Endothelial cell of umbilical vein (primary cell): ENCODE measurements at regions of chr4 and their contacts with region 1.

Region 1: GRCh38 chr4:143482840-143483239 is 30.7 kb upstream of the SMARCA5 start:
- DNase-seq: peak; percentile 74
- H3K4me3 ChIP-seq: no peak overlapping the region
- H3K27ac ChIP-seq: no peak overlapping the region
- H3K4me1 ChIP-seq: no peaks in the 10 kb centered on the region
- H3K27me3 ChIP-seq: no peaks in the 10 kb centered on the region
- CTCF ChIP-seq: peak; percentile 26 to 42
- POLR2A ChIP-seq: no peak

Region 2: DNA sequence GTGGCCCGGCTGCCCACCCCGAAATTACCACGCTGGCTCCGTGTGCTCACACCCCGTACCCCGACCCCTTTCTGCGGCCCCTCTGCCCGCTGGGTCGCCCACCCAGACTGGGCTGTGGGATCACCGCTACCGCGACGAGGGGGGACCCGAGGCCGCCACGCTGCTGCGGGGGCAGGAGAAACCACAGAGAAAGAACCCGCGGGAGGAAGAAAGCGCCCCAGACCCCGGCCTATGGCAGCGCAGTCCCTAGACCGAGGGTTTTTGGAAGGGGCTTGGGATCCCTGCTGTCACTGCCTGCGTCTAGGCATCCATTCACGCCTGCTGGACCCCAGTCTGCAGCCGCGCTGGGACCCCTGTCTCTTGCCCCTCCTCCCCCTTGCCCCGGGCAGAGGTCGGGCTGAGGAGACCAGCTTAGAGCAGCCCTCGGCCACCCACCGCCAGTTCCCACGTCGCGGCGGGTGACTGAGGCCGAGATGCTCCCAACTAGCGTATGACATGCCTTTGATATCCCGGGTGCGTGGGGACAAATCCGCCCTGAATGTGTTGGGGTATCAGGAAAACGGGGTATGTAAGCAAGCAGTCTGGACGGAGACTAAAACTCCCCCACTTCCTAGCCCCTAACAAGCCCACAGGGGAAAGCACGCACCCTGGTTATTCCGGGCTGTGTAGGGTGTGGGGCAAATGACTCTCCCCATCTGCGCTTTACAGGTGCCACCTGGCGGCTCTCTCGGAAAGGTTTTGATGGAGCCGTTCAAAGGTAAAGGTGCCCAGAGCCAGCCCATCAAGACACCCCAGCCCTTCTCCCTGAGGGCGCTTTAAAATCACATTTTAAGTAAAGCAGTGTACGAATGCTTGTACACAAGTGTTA is 635.9 kb before region 1 on chr4:
- CTCF ChIA-PET with region 1: no interaction called
- POLR2A ChIA-PET with region 1: no interaction called
- dilution Hi-C with region 1: no loop called
- intact Hi-C with region 1: loop called (anchors 5 kb)
- DNase-seq: peak; percentile 18
- H3K4me3 ChIP-seq: peak overlapping the region; percentile 42 to 68 (median 61)
- H3K27ac ChIP-seq: no peak overlapping the region
- H3K4me1 ChIP-seq: no peaks in the 10 kb centered on the region
- H3K27me3 ChIP-seq: peaks cover 14 to 21% of the 10 kb centered on the region in 2 experiments
- CTCF ChIP-seq: peak in 1 of 2 donors; percentile 22
- POLR2A ChIP-seq: no peak

Region 3: DNA sequence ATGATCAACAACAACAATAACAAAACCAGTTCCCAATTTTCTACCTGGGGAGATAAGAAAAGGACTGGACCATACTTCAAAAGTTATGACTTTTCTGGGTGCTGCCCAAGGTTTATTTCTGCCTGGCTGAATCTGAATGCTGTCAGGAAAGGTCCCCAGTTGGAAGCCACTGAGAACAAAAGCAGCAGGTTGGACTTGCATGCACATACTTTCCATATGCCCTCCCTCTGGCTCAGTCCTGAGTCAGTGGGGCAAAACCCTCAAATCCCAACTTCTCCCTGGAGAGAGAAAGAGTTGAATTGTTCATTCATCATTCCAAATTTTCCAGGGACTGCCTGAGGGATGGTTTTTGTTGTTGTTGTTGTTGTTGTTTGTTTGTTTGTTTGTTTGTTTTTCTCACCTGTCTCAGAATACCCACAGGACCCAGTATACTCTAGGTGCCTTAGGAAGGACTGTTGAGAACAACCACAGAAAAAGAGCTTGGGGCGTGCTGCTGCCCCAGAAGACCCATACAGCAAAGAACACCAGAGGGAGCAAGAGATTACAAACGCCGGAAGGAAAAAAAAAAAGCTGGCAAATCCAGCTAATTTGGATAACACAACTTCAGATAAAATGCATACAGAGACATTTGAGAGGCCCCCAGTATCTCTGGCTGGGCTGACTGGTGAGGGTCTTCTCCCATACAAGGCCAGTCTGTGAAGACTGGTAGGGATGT is 497.8 kb before region 1 on chr4:
- CTCF ChIA-PET with region 1: interaction called, 13 read pairs
- POLR2A ChIA-PET with region 1: no interaction called
- dilution Hi-C with region 1: no loop called
- intact Hi-C with region 1: loop called (anchors 1 kb)
- DNase-seq: peak; percentile 13
- H3K4me3 ChIP-seq: no peak overlapping the region
- H3K27ac ChIP-seq: no peak overlapping the region
- H3K4me1 ChIP-seq: no peaks in the 10 kb centered on the region
- H3K27me3 ChIP-seq: peaks cover 0 to 5% of the 10 kb centered on the region in 2 experiments
- CTCF ChIP-seq: peak; percentile 11 to 24
- POLR2A ChIP-seq: no peak

Region 4: GRCh38 chr4:143202824-143203223 is 280.0 kb before region 1 on chr4:
- CTCF ChIA-PET with region 1: interaction called, 24 read pairs
- POLR2A ChIA-PET with region 1: no interaction called
- dilution Hi-C with region 1: no loop called
- intact Hi-C with region 1: loop called (anchors 1 kb)
- DNase-seq: peak; percentile 46
- H3K4me3 ChIP-seq: no peak overlapping the region
- H3K27ac ChIP-seq: no peak overlapping the region
- H3K4me1 ChIP-seq: no peaks in the 10 kb centered on the region
- H3K27me3 ChIP-seq: no peaks in the 10 kb centered on the region
- CTCF ChIP-seq: no peak
- POLR2A ChIP-seq: no peak

Region 5: DNA sequence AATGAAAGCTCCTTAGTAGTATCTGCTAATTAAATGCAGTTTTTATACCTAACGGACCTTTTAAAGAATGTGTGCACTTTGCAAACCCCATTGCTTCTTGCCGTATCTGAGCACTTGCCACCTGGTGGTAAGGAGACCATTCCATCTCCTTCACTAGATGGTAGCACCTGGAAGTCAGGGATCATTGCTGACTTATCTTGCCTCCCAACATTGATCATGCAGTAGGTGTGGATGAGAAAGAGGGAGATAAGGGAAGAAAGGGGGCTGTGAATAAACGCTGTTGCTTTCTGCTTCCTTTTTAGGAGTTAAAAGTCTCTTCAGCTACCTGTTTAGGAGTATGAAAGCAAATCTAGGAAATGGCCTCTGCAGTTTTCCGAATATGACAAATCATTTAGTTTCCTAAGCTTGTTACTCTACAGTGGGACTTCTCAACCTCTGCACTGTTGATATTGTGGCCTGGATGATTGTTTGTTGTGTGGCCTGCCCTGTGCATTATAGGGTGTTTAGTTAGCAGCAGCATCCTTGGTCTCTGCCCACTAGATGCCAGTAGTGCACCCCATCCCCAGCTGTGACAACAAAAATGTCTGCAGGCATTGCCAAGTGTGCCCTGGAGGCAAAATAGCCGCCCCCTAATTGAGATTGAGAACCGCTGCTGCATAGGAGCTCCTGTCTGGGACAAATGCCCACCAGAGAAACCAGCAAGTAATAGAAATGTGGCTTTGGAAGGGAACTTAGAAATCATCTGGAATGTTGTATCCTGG is 107.3 kb before region 1 on chr4:
- CTCF ChIA-PET with region 1: interaction called, 5 read pairs
- POLR2A ChIA-PET with region 1: interaction called, 3 read pairs
- dilution Hi-C with region 1: no loop called
- intact Hi-C with region 1: loop called (anchors 1 kb)
- DNase-seq: peak; percentile 58
- H3K4me3 ChIP-seq: no peak overlapping the region
- H3K27ac ChIP-seq: no peak overlapping the region
- H3K4me1 ChIP-seq: no peaks in the 10 kb centered on the region
- H3K27me3 ChIP-seq: no peaks in the 10 kb centered on the region
- CTCF ChIP-seq: peak; percentile 21 to 53
- POLR2A ChIP-seq: no peak

Region 6: DNA sequence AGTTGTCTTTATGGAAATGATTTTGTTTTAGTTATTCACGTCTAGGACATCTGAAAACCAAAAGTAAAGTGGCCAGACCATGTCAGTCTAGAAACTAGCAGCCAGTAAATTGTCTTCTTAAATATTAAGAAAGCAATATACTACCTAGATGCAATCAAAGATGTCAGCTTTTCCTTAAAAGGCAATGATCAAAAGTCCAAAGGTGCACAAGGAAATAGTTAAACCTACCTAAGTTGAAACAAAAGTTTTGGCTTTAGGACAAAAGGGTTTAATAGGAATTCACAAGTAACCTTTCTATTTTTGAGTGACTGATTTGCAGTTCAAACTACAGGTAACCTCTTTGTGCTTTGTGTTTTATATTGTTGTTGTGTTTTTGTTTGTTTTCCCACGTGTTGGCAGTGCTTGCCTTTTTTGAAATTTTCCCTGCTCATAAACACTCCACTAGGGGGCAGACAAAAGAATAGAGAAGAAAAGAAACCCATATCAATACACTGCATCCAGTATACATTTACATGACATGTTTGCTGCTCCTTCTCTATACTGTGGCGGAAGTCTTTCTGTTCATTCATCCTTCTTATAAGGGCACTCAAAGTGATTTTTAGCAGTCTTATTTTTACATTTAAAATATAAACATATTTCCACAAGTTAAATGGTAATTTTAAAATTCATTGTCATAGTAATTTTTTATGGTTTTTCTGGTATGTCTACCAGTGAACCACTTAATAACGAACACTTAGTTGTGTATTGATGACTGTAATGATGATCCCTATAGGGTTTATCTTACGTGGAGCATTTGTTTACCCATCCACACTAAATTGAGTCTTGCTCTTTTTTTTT is 83.5 kb before region 1 on chr4:
- CTCF ChIA-PET with region 1: interaction called, 3 read pairs
- POLR2A ChIA-PET with region 1: no interaction called
- dilution Hi-C with region 1: no loop called
- intact Hi-C with region 1: loop called (anchors 1 kb)
- DNase-seq: peak; percentile 72
- H3K4me3 ChIP-seq: no peak overlapping the region
- H3K27ac ChIP-seq: no peak overlapping the region
- H3K4me1 ChIP-seq: peaks cover 33% of the 10 kb centered on the region
- H3K27me3 ChIP-seq: no peaks in the 10 kb centered on the region
- CTCF ChIP-seq: peak; percentile 46 to 48
- POLR2A ChIP-seq: no peak